Activated T-helper 2 cell treated with anti-CD3 and anti-CD28 coated beads, Interferon-gamma antibody, Interleukin-2, Interleukin-4, amounts not matched to agents 10 μg/mL and 5 μg/mL and 100 μg/mL, durations not matched to agents 14 hours and 24 hours and 36 hours (primary cell): ENCODE measurements at regions of chr11 and their contacts with region 1.

Region 1: GRCh38 chr11:4072668-4073285 is 21.8 kb upstream of the RRM1 start:
- DNase-seq: no peak
- H3K4me3 Mint-ChIP-seq: no peak overlapping the region
- H3K27ac Mint-ChIP-seq: no peak overlapping the region
- H3K4me1 Mint-ChIP-seq: peaks cover 21% of the 10 kb centered on the region
- H3K27me3 Mint-ChIP-seq: no peaks in the 10 kb centered on the region

Region 2: DNA sequence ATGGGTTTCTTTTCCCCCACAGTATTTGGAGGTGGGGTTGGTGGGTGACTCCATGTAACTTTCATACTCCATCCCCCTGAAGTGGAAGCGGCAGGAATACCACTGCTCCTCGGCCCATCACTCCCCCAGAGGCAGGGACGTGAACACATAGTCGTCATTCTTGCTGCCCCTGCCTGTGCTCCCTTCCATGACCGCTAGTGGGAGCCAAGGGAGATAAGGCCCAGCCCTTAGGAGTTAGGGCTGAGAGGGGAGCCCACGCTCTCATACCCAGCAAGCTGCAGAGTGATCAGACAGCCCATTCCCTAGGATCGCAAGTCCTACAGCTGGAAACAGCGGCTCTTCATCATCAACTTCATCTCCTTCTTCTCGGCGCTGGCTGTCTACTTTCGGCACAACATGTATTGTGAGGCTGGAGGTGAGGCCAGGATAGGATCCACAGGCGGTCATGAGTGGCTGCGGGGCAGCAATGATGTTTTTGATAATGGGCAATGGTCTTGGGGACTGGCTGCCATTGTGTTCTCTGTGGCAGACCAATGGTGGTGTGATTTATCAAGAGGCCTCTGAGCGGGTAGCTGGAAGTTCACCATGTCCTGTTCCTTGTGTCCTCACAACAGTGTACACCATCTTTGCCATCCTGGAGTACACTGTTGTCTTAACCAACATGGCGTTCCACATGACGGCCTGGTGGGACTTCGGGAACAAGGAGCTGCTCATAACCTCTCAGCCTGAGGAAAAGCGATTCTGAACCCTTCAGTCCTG is 247.9 kb before region 1 on chr11:
- intact Hi-C with region 1: loop called (anchors 1 kb)
- DNase-seq: peak; percentile 67
- H3K4me3 Mint-ChIP-seq: no peak overlapping the region
- H3K27ac Mint-ChIP-seq: peak overlapping the region; percentile 48
- H3K4me1 Mint-ChIP-seq: peaks cover 24% of the 10 kb centered on the region
- H3K27me3 Mint-ChIP-seq: no peaks in the 10 kb centered on the region

Region 3: DNA sequence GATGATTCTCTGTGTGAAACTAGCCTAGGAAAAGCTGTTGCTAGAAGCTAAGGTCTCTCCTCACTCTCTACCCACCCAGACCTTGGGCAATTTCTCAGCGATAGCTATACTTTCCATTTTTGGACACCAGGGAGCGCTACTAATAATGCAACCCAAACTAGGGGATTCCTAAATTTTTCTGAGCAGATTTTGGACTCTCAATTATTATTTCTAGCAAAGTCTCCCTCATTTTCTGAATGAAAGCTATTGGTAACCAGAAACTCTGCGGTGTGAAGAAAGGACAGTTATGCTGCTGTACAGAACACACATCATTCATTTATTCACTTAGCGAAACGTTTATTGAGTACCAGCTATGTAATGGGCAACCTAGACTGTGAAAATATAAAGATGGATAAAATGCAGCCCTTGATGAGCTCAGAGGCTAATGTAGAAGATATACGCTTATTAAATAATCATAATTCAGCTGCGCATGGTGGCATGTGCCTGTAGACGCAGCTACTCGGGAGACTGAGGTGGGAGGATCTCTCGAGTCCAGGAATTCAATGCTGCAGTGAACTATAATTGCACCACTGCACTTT is 223.4 kb before region 1 on chr11:
- intact Hi-C with region 1: loop called (anchors 1 kb)
- DNase-seq: no peak
- H3K4me3 Mint-ChIP-seq: no peak overlapping the region
- H3K27ac Mint-ChIP-seq: no peak overlapping the region
- H3K4me1 Mint-ChIP-seq: peaks cover 46% of the 10 kb centered on the region
- H3K27me3 Mint-ChIP-seq: no peaks in the 10 kb centered on the region

Region 4: GRCh38 chr11:3854977-3855807 is 217.6 kb before region 1 on chr11 and contains the start of gene STIM1:
- intact Hi-C with region 1: loop called (anchors 1 kb)
- DNase-seq: peak; percentile 98
- H3K4me3 Mint-ChIP-seq: peak within 1 kb of the TSS; percentile 99
- H3K27ac Mint-ChIP-seq: peak within 1 kb of the TSS; percentile 96
- H3K4me1 Mint-ChIP-seq: peaks cover 52% of the 10 kb centered on the region
- H3K27me3 Mint-ChIP-seq: no peaks in the 10 kb centered on the region
- total RNA-seq, gene STIM1: 77.6 and 78.0 TPM in 2 replicates

Region 5: DNA sequence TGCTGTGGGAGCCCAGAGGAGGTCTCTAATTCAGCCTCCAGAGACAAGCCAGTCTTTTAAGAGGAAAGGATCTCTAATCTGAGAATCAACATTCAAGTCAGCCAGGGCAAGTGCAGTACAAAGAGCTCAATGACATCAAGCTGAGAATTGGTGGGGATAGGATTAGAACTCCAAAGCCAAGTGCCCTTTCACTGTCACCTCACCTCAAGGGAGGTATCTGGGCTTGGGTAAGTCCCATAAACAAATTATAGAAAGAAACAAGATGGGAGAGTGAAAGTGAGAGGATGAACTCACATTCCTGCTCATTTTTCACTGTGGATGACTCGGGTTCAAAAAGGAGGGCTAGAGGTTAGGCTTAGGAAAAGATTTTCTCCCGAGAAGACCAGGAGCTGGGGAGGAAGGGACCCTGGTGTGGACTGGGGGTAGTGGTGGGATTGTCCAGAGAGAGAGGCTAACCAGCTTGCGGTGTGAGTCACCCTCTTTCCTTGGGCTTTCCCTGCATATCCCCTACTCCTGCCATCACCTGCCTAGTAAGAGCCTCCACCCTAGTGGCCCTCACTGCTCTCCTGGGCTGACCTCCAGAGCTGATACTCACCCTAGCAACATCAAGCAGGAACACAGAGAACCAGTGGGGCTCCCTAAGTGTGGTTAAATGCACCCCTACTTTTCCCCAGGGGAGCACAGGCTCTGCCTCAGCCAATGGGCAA is 92.3 kb after region 1 on chr11:
- intact Hi-C with region 1: no loop called
- DNase-seq: no peak
- H3K4me3 Mint-ChIP-seq: no peak overlapping the region
- H3K27ac Mint-ChIP-seq: no peak overlapping the region
- H3K4me1 Mint-ChIP-seq: no peaks in the 10 kb centered on the region
- H3K27me3 Mint-ChIP-seq: peaks cover 4% of the 10 kb centered on the region